Endothelial cell of umbilical vein (primary cell): ENCODE measurements at regions of chrX and their contacts with region 1.

Region 1: GRCh38 chrX:17046478-17047097 is 100.1 kb downstream of the REPS2 start:
- DNase-seq: peak; percentile 62
- H3K4me3 ChIP-seq: no peak overlapping the region
- H3K27ac ChIP-seq: no peak overlapping the region
- H3K4me1 ChIP-seq: no peaks in the 10 kb centered on the region
- H3K27me3 ChIP-seq: no peaks in the 10 kb centered on the region
- CTCF ChIP-seq: peak; percentile 50 to 65
- POLR2A ChIP-seq: no peak

Region 2: DNA sequence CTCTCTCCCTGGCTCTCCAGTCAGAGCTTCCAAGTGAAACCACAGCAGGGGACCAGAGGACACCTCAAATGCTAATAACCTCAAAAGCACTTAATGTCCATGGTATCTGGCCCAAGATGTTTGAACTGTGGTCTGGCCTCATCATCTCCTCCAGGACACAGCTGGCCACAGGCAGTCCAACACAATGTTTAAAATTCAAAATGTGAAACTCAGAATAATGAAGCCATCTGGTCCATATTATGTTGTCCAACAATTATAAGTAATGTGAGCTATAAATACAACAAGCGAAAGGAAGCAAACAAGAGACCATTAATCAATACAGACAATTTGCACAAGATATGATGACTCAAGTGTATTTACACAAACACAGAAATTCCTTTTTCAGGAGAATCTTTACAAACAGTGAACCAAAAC is 487.4 kb before region 1 on chrX:
- CTCF ChIA-PET with region 1: no interaction called
- POLR2A ChIA-PET with region 1: no interaction called
- dilution Hi-C with region 1: no loop called
- intact Hi-C with region 1: no loop called
- DNase-seq: no peak
- H3K4me3 ChIP-seq: no peak overlapping the region
- H3K27ac ChIP-seq: no peak overlapping the region
- H3K4me1 ChIP-seq: no peaks in the 10 kb centered on the region
- H3K27me3 ChIP-seq: no peaks in the 10 kb centered on the region
- CTCF ChIP-seq: no peak
- POLR2A ChIP-seq: no peak

Region 3: GRCh38 chrX:16882702-16883486 is 163.7 kb before region 1 on chrX:
- CTCF ChIA-PET with region 1: interaction called, 280 read pairs
- POLR2A ChIA-PET with region 1: no interaction called
- dilution Hi-C with region 1: no loop called
- intact Hi-C with region 1: loop called (anchors 1 kb)
- DNase-seq: peak; percentile 73
- H3K4me3 ChIP-seq: peak overlapping the region; percentile 40 to 73 (median 61)
- H3K27ac ChIP-seq: peak overlapping the region; percentile 55
- H3K4me1 ChIP-seq: peaks cover 11% of the 10 kb centered on the region
- H3K27me3 ChIP-seq: no peaks in the 10 kb centered on the region
- CTCF ChIP-seq: peak; percentile 51 to 59
- POLR2A ChIP-seq: no peak

Region 4: GRCh38 chrX:16946361-16946964 is 100.1 kb before region 1 on chrX and contains the start of gene REPS2:
- CTCF ChIA-PET with region 1: interaction called, 23 read pairs
- POLR2A ChIA-PET with region 1: no interaction called
- dilution Hi-C with region 1: no loop called
- intact Hi-C with region 1: loop called (anchors 1 kb)
- DNase-seq: peak; percentile 56
- H3K4me3 ChIP-seq: peak within 1 kb of the TSS; percentile 41 to 65 (median 56)
- H3K27ac ChIP-seq: no peak within 1 kb of the TSS
- H3K4me1 ChIP-seq: peaks cover 3% of the 10 kb centered on the region
- H3K27me3 ChIP-seq: peaks cover 0 to 3% of the 10 kb centered on the region in 2 experiments
- CTCF ChIP-seq: no peak
- POLR2A ChIP-seq: no peak
- total RNA-seq, gene REPS2: 2.6 and 4.9 TPM in 2 replicates

Region 5: DNA sequence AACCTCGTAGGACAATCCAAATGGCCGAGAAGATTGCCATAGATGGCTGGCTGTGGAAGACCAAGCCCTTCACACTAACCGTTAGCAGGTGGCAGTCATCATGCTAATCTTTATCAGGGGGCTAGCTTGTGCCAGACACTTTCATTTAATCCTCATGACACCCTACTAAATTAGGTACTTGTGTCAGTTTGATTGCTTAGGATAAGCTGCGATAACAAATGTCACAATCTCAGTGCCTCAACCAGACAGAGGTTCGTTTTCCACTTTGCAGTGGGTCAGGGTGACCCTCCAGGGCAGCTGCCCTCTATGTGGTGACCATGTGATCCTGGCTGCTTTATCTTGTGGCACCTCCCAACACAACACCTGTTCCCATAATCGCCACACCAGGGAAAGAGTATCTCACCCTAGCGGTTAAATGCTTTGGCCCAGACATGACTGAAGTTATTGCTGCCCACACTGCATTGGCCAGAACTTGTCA is 39.3 kb before region 1 on chrX:
- CTCF ChIA-PET with region 1: interaction called, 104 read pairs
- POLR2A ChIA-PET with region 1: no interaction called
- dilution Hi-C with region 1: no loop called
- intact Hi-C with region 1: no loop called
- DNase-seq: peak; percentile 10
- H3K4me3 ChIP-seq: no peak overlapping the region
- H3K27ac ChIP-seq: no peak overlapping the region
- H3K4me1 ChIP-seq: no peaks in the 10 kb centered on the region
- H3K27me3 ChIP-seq: no peaks in the 10 kb centered on the region
- CTCF ChIP-seq: peak; percentile 11 to 42
- POLR2A ChIP-seq: no peak

Region 6: DNA sequence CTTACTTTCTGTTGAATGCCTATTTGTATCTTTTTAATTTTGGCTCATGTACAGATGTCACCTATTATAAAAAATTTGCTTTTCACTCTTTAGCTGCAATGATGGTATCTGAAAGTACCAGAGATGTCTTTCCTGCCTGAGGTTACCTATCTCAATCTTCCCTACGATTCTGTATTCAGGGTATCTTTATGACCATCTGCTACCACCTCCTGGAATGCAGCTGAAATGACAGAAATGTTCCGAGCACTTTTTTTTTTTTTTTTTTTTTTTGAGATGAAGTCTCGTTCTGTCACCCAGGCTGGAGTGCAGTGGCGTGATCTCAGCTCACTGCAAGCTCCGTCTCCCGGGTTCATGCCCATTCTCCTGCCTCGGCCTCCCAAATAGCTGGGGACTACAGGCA is 36.2 kb after region 1 on chrX:
- CTCF ChIA-PET with region 1: interaction called, 11 read pairs
- POLR2A ChIA-PET with region 1: no interaction called
- dilution Hi-C with region 1: no loop called
- intact Hi-C with region 1: no loop called
- DNase-seq: peak; percentile 3
- H3K4me3 ChIP-seq: no peak overlapping the region
- H3K27ac ChIP-seq: no peak overlapping the region
- H3K4me1 ChIP-seq: peaks cover 8% of the 10 kb centered on the region
- H3K27me3 ChIP-seq: no peaks in the 10 kb centered on the region
- CTCF ChIP-seq: no peak
- POLR2A ChIP-seq: no peak